Activated naive CD4-positive, alpha-beta T cell treated with anti-CD3 and anti-CD28 coated beads for 36 hours (primary cell): ENCODE measurements at regions of chr10 and their contacts with region 1.

Region 1: GRCh38 chr10:110681023-110681681 is 37.0 kb downstream of the RBM20 start:
- DNase-seq: peak; percentile 51
- H3K4me3 Mint-ChIP-seq: no peak overlapping the region
- H3K27ac Mint-ChIP-seq: no peak overlapping the region
- H3K4me1 Mint-ChIP-seq: peaks cover 4% of the 10 kb centered on the region
- H3K27me3 Mint-ChIP-seq: peaks cover 2% of the 10 kb centered on the region

Region 2: GRCh38 chr10:111207500-111207899 is 526.3 kb after region 1 on chr10:
- CTCF ChIA-PET with region 1: no interaction called
- intact Hi-C with region 1: loop called (anchors 2 kb)
- DNase-seq: peak; percentile 65
- H3K4me3 Mint-ChIP-seq: no peak overlapping the region
- H3K27ac Mint-ChIP-seq: no peak overlapping the region
- H3K4me1 Mint-ChIP-seq: no peaks in the 10 kb centered on the region
- H3K27me3 Mint-ChIP-seq: peaks cover 2% of the 10 kb centered on the region